ENCODE measurements at regions of chr1 and their contacts with region 1.

Region 1: GRCh38 chr1:27392096-27392777 is at the start of gene GPR3:
- DNase-seq: peak; percentile 96
- ATAC-seq: peak; percentile 92
- H3K4me3 Mint-ChIP-seq: peak within 1 kb of the TSS; percentile 65
- H3K27ac Mint-ChIP-seq: peak within 1 kb of the TSS; percentile 89
- H3K4me1 Mint-ChIP-seq: peaks cover 17% of the 10 kb centered on the region
- H3K27me3 Mint-ChIP-seq: no peaks in the 10 kb centered on the region
- CTCF ChIP-seq: peak; percentile 43
- total RNA-seq, gene GPR3: 1.1 to 1.7 TPM

Region 2: DNA sequence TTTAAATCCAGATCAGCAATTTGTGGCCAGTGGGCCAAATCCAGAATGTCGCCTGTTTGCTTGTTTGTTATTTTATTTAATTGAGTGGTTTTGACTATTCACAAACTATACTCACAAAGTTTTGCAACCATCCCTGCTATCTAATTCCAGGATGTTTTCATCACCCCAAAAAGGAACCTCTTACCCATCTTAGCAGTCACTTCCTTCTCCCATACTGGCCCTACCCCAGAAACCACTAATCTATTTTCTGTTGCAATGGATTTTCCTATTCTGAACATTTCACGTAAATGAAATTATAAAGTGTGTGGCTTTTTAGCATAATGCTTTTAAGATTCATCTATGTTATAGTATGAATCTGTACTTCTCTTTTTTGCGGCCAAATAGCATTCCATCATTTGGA is 116.5 kb before region 1 on chr1:
- CTCF ChIA-PET with region 1: no interaction called
- POLR2A ChIA-PET with region 1: no interaction called
- intact Hi-C with region 1: no loop called
- DNase-seq: no peak
- ATAC-seq: no peak
- H3K4me3 Mint-ChIP-seq: no peak overlapping the region
- H3K27ac Mint-ChIP-seq: no peak overlapping the region
- H3K4me1 Mint-ChIP-seq: peaks cover 11% of the 10 kb centered on the region
- H3K27me3 Mint-ChIP-seq: no peaks in the 10 kb centered on the region
- CTCF ChIP-seq: no peak

Region 3: GRCh38 chr1:27321813-27322577 is 70.2 kb before region 1 on chr1 and contains the start of gene TMEM222:
- CTCF ChIA-PET with region 1: interaction called, 16 read pairs
- POLR2A ChIA-PET with region 1: interaction called, 3 read pairs
- intact Hi-C with region 1: no loop called
- DNase-seq: peak; percentile 97
- ATAC-seq: peak; percentile 98
- H3K4me3 Mint-ChIP-seq: peak within 1 kb of the TSS; percentile 95
- H3K27ac Mint-ChIP-seq: peak within 1 kb of the TSS; percentile 95
- H3K4me1 Mint-ChIP-seq: peaks cover 39% of the 10 kb centered on the region
- H3K27me3 Mint-ChIP-seq: no peaks in the 10 kb centered on the region
- CTCF ChIP-seq: no peak
- total RNA-seq, gene TMEM222: 22.0 to 25.4 TPM

Region 4: GRCh38 chr1:27341525-27342252 is 50.5 kb before region 1 on chr1 and contains the start of gene SYTL1:
- CTCF ChIA-PET with region 1: interaction called, 10 read pairs
- POLR2A ChIA-PET with region 1: interaction called, 5 read pairs
- intact Hi-C with region 1: loop called (anchors 10 kb)
- DNase-seq: peak; percentile 85
- ATAC-seq: peak; percentile 70
- H3K4me3 Mint-ChIP-seq: peak within 1 kb of the TSS; percentile 84
- H3K27ac Mint-ChIP-seq: peak within 1 kb of the TSS; percentile 89
- H3K4me1 Mint-ChIP-seq: peaks cover 39% of the 10 kb centered on the region
- H3K27me3 Mint-ChIP-seq: no peaks in the 10 kb centered on the region
- CTCF ChIP-seq: no peak
- total RNA-seq, gene SYTL1: 77.7 to 80.6 TPM

Region 5: DNA sequence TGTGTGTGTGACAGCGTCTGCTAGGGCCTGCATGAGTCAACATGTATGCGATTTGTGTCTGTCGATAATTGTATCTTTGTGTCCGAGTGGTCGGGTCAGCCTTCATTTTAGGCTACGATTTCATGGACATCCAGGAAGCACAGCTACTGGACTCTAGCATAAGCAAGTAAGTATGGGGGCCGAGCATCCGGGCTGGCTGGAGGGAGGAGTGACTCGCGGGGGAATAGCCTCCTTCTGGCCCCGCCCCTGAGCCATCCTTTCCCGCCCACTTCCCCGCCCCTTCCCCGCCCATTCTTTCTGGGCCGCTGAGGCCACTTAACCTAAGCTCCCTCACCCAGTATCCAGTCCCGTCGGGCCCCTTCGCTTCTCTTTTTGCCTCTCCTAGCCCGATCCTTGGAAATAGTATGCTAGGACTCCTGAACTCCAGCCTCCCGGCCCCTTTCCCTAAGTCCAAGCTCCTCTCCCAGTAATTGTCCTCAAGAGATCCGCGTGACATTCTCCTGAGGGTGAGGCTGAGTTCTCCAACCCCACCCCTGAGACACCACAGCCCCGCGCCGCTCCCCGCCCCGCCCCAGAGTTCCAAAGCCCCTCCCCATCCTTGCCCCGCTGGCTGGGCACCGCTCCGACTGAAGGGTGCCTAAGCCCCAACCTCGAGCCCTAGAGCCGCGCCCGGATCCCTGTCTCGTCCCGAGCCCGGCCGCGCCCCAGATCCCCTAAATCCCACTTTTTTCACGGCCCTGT is 26.7 kb before region 1 on chr1:
- CTCF ChIA-PET with region 1: interaction called, 75 read pairs
- POLR2A ChIA-PET with region 1: interaction called, 4 read pairs
- intact Hi-C with region 1: no loop called
- DNase-seq: peak; percentile 90
- ATAC-seq: peak; percentile 76
- H3K4me3 Mint-ChIP-seq: peak overlapping the region; percentile 82
- H3K27ac Mint-ChIP-seq: peak overlapping the region; percentile 71
- H3K4me1 Mint-ChIP-seq: peaks cover 18% of the 10 kb centered on the region
- H3K27me3 Mint-ChIP-seq: no peaks in the 10 kb centered on the region
- CTCF ChIP-seq: no peak

Region 6: DNA sequence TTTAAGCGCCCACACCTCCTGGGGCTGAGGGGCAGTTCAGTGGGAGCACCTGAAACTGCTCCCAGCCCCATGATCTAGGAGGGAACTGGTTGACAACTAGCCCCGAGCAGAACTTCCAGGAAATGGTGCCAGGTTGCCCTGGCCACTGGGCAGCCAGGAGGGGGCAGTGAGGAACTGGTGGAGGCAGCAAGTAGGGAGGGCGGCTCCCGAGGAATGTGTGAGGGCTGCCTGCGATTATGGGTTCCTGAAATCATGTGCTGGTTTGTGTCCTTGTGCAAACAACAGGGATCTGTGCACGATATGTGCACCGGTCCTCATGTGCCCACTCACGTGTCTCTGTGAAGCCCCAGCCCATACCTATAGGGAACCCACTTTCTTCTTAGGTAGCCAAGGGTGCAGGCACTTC is 10.1 kb after region 1 on chr1:
- CTCF ChIA-PET with region 1: interaction called, 16 read pairs
- POLR2A ChIA-PET with region 1: no interaction called
- intact Hi-C with region 1: no loop called
- DNase-seq: no peak
- ATAC-seq: no peak
- H3K4me3 Mint-ChIP-seq: no peak overlapping the region
- H3K27ac Mint-ChIP-seq: peak overlapping the region; percentile 83
- H3K4me1 Mint-ChIP-seq: peaks cover 24% of the 10 kb centered on the region
- H3K27me3 Mint-ChIP-seq: no peaks in the 10 kb centered on the region
- CTCF ChIP-seq: no peak

Region 7: GRCh38 chr1:27568300-27569087 is 176.3 kb after region 1 on chr1:
- CTCF ChIA-PET with region 1: interaction called, 12 read pairs
- POLR2A ChIA-PET with region 1: no interaction called
- intact Hi-C with region 1: no loop called
- DNase-seq: peak; percentile 92
- ATAC-seq: peak; percentile 91
- H3K4me3 Mint-ChIP-seq: peak overlapping the region; percentile 44
- H3K27ac Mint-ChIP-seq: peak overlapping the region; percentile 32
- H3K4me1 Mint-ChIP-seq: peaks cover 25% of the 10 kb centered on the region
- H3K27me3 Mint-ChIP-seq: no peaks in the 10 kb centered on the region
- CTCF ChIP-seq: peak; percentile 73

Region 8: GRCh38 chr1:27704958-27705357 is 312.7 kb after region 1 on chr1:
- CTCF ChIA-PET with region 1: no interaction called
- POLR2A ChIA-PET with region 1: no interaction called
- intact Hi-C with region 1: no loop called
- DNase-seq: no peak
- ATAC-seq: no peak
- H3K4me3 Mint-ChIP-seq: no peak overlapping the region
- H3K27ac Mint-ChIP-seq: no peak overlapping the region
- H3K4me1 Mint-ChIP-seq: no peaks in the 10 kb centered on the region
- H3K27me3 Mint-ChIP-seq: peaks cover 2% of the 10 kb centered on the region
- CTCF ChIP-seq: no peak

Measured in activated CD8-positive, alpha-beta T cell treated with anti-CD3 and anti-CD28 coated beads for 36 hours (primary cell).